ENCODE measurements at regions of chr6 and their contacts with region 1.

Region 1: DNA sequence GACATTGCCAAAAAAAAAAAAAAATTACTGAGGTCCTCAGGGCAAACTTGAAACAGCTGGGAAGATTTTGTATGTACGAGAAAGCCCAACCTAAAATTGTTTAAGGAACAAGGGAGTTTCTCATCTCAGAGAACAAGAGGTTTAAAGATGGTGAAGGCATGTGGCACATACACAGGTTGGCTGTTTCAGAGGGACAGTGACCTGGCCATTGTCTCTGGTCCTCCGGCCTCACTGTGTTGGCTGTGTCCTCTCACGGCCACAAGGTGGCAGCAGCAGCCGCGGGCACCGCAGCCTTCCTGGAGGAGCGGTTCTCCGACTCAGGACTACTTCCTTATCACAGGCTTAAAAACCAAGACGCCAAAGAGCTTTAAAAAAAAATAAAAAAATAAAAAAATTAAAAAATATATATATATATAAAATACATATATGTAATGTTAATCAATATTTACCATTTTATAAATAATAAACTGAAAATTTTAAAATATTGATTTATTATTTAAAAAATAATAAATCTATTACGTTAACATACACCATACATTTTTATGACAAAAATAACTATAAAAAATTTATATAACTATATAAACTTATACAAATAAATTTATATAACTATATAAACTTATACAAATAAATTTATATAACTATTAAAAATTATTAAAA is 52.8 kb downstream of the GTF2H5 start:
- DNase-seq: peak; percentile 85
- CTCF ChIP-seq: peak; percentile 95

Region 2: DNA sequence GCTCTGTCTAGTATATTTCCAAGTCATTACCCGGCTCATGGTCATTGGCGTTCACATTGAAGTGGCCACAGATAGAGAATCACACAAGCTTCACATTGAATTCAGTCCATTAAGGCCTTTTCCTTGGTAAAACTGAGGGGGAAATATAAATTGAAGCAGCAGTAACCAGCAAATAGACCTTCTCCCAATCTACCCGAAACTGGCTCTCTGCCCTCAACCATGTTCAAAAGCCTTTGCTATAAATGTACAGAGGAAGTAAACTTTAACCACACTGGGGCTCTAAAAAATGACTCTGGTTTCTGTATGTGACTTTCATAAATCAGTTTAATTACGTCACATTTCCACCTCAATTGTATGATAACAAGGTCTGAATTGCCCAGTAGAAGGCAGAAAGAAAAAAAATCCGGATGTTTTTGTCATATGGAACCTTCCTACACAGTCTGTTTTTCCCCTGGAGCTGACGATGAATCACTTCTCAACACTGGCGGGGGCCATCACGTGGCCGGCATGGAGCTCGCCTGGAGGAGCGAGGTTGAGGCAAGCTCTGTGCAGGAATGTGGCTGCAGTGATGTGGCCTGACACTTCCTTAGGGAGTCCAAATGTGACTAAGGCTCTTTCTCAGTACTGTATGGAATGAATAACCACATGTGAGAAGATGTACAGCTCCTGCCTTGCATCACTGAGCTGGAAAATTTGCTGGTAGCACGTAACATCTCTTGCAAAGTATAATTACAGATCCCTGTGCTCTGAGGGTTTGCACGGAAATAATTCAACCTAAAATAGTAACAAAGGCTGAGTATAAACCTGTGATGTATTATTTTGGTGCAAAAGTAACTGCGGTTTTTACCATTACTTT is 456.5 kb before region 1 on chr6:
- CTCF ChIA-PET with region 1: no interaction called
- POLR2A ChIA-PET with region 1: no interaction called
- DNase-seq: peak; percentile 74
- CTCF ChIP-seq: no peak

Region 3: GRCh38 chr6:158131926-158132325 is 89.0 kb before region 1 on chr6:
- CTCF ChIA-PET with region 1: no interaction called
- POLR2A ChIA-PET with region 1: no interaction called
- DNase-seq: peak; percentile 17
- CTCF ChIP-seq: peak; percentile 30

Region 4: DNA sequence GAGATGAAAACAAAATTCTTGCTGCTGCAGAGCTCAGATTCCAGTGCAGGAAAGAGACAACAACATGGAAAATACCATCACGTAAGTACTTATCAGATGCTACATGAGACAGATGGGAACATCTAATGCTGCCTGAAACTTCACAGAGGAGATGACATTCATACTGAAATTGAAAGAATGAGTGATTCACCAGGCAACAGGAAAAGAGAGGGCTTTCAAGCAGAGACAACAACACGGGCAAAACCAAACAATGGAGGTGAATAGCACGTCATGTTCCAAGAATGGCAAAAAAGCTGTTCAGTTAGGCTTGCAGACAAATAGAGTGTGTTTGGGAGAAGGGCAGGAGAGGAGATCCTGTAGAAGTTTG is 13.5 kb before region 1 on chr6:
- CTCF ChIA-PET with region 1: interaction called, 15 read pairs
- POLR2A ChIA-PET with region 1: no interaction called
- DNase-seq: peak; percentile 75
- CTCF ChIP-seq: no peak

Region 5: GRCh38 chr6:158272324-158272723 is 51.4 kb after region 1 on chr6:
- CTCF ChIA-PET with region 1: interaction called, 10 read pairs
- POLR2A ChIA-PET with region 1: no interaction called
- DNase-seq: no peak
- CTCF ChIP-seq: no peak

Region 6: GRCh38 chr6:158605266-158605878 is 384.5 kb after region 1 on chr6:
- CTCF ChIA-PET with region 1: interaction called, 20 read pairs
- POLR2A ChIA-PET with region 1: no interaction called
- DNase-seq: peak; percentile 72
- CTCF ChIP-seq: peak; percentile 70

Region 7: DNA sequence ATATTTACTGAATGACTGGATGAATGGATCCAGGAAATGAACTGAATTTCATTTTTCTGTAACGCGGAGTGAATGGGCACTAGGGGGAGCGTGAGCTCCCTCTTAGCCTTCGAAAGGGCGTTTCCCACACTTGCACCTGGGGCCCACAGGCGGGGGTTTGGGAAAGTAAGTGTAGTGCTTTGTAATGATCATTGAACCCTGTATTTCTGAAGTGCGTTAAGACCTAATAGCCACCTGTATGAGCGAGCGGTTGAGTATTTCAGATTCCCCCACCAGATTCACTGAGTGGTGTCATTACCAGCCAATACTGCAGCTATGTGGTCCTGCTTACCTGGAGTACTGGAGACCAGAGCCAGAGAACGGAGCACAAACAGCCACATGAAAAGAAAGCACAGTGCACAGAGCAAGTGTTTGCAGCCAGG is 439.4 kb after region 1 on chr6:
- CTCF ChIA-PET with region 1: interaction called, 10 read pairs
- POLR2A ChIA-PET with region 1: no interaction called
- DNase-seq: peak; percentile 65
- CTCF ChIP-seq: peak; percentile 58

Region 8: GRCh38 chr6:158784505-158784904 is 563.6 kb after region 1 on chr6:
- CTCF ChIA-PET with region 1: no interaction called
- POLR2A ChIA-PET with region 1: no interaction called
- DNase-seq: no peak
- CTCF ChIP-seq: no peak

Measured in GM10248 (cell line).